ENCODE measurements at regions of chr10 and their contacts with region 1.

Region 1: DNA sequence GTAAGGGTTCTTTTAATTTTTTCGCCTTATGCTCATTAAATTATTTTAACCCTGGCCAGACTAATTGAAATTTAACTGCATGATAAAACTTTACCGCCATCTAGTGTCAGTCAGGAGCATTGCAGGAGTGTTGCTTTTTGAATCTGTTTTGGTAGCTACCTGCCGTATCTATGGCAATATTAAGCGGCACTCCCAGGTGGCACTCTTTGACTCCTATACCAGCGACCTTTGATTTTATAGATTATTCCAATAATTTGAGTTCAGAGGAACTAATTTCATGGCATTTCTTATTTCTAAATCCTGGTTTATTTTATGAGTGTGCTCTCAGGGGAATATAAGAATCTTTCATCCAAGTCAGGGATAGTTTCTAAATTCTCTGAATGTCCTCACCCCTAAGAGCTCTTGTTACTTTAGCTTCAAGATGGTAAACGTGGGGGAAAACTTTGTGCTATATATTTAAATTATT is 198.9 kb downstream of the REEP3 start:
- DNase-seq: no peak
- H3K4me3 ChIP-seq: no peak overlapping the region
- CTCF ChIP-seq: peak; percentile 71

Region 2: GRCh38 chr10:63173468-63174232 is 546.5 kb before region 1 on chr10:
- CTCF ChIA-PET with region 1: interaction called, 375 read pairs
- POLR2A ChIA-PET with region 1: no interaction called
- DNase-seq: no peak
- H3K4me3 ChIP-seq: no peak overlapping the region
- CTCF ChIP-seq: no peak

Region 3: DNA sequence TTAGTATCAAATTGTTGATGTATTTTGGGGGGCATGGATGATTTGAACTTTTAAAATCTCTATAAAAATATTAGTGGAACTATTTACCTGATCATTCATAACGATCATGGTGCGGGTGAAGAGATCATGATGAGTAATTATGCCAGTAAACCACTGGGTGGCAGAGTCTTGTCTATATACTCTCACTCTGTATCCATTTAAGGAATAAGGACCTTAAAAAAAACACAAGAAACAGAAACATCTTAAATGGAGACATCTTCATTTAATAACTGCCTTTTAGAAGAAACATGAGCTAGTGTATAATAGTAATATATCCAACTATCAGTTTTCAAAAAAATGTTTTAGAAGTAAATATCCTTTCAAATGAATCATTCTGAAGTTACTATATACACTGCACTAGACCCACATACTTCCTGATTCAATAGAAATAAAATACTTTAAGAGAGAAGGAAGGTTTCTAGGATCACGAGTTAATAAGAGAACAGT is 502.9 kb before region 1 on chr10:
- CTCF ChIA-PET with region 1: interaction called, 31 read pairs
- POLR2A ChIA-PET with region 1: no interaction called
- DNase-seq: no peak
- H3K4me3 ChIP-seq: no peak overlapping the region
- CTCF ChIP-seq: peak; percentile 42

Region 4: DNA sequence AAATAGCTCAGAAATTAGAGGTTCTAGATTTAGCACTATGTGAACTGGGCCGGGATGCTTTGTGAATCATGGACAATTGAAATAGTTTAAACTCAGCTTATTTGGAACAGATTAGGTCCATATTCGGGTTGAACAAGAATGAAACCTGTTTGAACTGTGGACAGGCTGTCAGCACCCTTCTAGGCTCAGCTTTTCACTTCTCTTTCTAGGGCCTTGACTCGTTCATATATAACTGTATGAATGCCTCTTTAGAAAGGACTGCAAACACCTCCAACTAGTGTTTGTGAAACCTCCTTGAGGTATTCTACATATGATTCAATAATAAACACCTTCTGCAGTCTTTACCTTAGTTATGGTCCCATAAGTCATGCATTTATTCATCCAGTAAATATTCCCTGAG is 83.3 kb before region 1 on chr10:
- CTCF ChIA-PET with region 1: interaction called, 166 read pairs
- POLR2A ChIA-PET with region 1: no interaction called
- DNase-seq: no peak
- H3K4me3 ChIP-seq: no peak overlapping the region
- CTCF ChIP-seq: no peak

Region 5: DNA sequence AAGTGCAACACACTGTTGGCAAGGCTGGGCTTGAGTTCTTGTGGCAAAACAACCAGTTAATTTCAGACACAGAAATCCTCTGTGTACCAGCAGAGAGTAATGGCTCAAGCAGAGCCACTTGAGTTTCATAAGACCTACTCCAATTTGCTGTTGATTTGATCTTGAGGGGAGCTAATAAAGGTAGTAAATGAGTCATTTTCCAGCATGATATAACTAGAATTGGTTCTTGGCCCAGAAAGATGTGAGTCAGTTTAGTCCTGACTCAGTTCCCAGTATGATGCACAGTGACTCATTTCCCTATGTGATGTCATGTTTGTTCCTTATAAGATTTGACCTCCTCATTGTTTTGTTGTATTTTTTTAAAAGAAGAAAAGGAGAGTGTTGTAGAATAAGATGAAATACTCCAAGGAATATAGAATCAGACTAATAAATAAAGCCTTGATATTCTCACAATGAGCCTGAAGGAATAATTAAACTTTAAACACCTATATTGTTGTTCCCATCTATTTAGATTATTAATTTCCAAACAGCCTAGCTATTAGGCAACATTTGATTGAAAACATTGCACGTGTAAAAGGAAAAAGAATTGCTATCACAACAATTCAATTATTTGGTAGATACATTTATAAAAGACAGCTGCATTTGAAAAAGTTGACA is 12.7 kb before region 1 on chr10:
- CTCF ChIA-PET with region 1: interaction called, 30 read pairs
- POLR2A ChIA-PET with region 1: no interaction called
- DNase-seq: peak; percentile 96
- H3K4me3 ChIP-seq: no peak overlapping the region
- CTCF ChIP-seq: no peak

Region 6: DNA sequence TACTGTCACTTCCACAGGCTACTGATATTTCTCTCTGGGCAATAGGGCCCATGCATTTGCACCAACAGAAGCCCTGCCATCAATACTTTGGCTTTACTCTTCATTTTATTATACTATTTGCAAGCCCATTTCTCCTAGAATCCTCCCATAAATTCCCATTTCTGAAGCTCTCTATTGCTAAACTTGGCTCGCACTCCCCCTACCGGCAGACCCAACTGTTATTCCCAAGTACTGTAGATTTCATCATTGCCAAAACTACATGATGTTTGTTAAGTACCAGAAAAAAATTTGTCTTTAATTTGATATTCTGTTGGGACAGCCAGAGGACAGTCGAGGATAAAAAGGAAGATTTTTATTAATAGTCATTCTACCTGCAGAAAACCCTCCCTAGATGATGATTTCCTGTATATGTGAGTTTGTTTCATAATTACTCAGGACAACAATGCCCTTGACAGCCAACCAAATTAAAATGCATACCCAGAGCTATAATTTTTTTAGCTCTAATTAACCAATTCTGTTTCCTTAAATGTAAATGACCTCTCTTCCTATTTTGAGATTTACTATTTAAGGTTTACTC is 99.7 kb after region 1 on chr10:
- CTCF ChIA-PET with region 1: interaction called, 13 read pairs
- POLR2A ChIA-PET with region 1: no interaction called
- DNase-seq: peak; percentile 12
- H3K4me3 ChIP-seq: no peak overlapping the region
- CTCF ChIP-seq: peak; percentile 73

Region 7: DNA sequence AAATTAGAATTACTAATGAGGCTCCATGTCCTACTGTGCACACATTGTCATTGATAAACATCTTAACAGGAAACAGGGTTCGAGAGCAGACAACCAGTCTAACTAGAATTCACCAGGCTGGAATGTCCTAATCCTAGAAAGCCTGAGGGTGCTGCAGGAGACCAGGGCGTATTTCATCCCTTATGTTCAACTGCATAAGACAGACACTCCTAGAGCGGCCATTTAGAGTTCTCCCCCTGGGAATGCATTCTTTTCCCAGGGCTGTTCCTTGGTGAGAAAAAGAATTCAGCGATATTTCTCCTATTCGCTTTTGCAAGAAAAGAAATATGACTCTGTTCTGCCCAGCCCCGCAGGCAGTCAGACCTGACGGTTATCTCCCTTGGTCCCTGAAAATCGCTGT is 287.1 kb after region 1 on chr10:
- CTCF ChIA-PET with region 1: no interaction called
- POLR2A ChIA-PET with region 1: no interaction called
- DNase-seq: no peak
- H3K4me3 ChIP-seq: no peak overlapping the region
- CTCF ChIP-seq: no peak

Measured in AG04449 (cell line).